ENCODE measurements at regions of chr16 and their contacts with region 1.

Region 1: GRCh38 chr16:11819798-11820197 is 22.7 kb upstream of the ZC3H7A start:
- DNase-seq: no peak

Region 2: DNA sequence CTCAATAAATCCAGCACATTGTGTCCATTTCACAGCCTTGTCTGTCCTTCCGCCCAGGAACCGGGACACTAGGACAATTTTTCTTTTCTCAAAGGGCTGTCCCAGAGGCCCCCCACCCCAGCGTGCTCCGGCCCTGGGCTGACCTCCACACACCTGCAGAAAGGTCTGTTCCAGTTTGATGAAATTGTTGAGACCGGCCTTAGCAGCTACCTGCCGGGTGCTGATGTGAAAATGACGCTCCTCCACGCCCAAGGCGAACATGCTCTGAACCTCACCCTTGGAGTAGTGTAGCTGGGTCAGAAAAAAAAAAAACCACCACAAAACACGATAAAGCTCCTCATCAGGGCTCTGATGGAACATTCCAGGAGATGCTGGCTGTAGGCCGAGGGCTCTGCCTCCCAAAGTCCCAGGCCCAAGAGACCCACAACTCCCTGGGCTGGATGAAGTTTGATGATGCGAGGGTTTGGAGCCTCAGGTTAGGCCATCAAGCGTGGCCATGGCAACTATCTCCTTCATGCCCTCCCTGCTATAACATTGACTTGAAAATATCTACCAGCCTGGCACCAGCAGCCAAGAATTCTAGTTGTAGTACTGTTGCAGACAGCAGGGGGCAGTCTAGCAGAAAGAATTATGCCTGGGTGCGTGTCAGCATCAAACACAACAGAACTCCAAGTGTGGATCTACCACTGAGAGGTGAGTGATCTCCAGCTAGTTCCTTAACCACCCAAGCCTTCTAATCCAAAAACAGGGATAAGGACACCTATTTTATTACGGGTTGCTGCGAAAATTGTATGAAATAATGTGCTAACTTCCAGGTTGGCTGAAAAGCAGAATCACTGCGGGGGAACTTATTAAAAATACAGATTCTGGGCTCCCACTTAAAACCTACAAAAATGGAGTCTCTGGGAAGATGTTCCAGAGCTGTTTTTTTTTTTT is 412.5 kb before region 1 on chr16:
- intact Hi-C with region 1: loop called in 1 of 2 experiments (anchors 10 kb)
- DNase-seq: no peak

Region 3: GRCh38 chr16:12721841-12722421 is 902.1 kb after region 1 on chr16:
- intact Hi-C with region 1: no loop called
- DNase-seq: no peak